PC-3 (cell line): ENCODE measurements at regions of chr1 and their contacts with region 1.

Region 1: GRCh38 chr1:115609021-115609420 is 32.7 kb upstream of the VANGL1 start:
- DNase-seq: peak; percentile 17
- ATAC-seq: peak; percentile 22; the same call in 1 of the 2 replicates
- H3K4me3 ChIP-seq: no peak overlapping the region
- H3K27ac ChIP-seq: no peak overlapping the region
- H3K4me1 ChIP-seq: peaks cover 10% of the 10 kb centered on the region
- H3K27me3 ChIP-seq: no peaks in the 10 kb centered on the region
- CTCF ChIP-seq: no peak

Region 2: GRCh38 chr1:115764541-115764940 is 155.5 kb after region 1 on chr1:
- CTCF ChIA-PET with region 1: interaction called, 22 read pairs
- POLR2A ChIA-PET with region 1: no interaction called
- intact Hi-C with region 1: loop called (anchors 1 kb)
- DNase-seq: peak; percentile 83
- ATAC-seq: peak; percentile 67
- H3K4me3 ChIP-seq: no peak overlapping the region
- H3K27ac ChIP-seq: no peak overlapping the region
- H3K4me1 ChIP-seq: no peaks in the 10 kb centered on the region
- H3K27me3 ChIP-seq: no peaks in the 10 kb centered on the region
- CTCF ChIP-seq: peak; percentile 79

Region 3: DNA sequence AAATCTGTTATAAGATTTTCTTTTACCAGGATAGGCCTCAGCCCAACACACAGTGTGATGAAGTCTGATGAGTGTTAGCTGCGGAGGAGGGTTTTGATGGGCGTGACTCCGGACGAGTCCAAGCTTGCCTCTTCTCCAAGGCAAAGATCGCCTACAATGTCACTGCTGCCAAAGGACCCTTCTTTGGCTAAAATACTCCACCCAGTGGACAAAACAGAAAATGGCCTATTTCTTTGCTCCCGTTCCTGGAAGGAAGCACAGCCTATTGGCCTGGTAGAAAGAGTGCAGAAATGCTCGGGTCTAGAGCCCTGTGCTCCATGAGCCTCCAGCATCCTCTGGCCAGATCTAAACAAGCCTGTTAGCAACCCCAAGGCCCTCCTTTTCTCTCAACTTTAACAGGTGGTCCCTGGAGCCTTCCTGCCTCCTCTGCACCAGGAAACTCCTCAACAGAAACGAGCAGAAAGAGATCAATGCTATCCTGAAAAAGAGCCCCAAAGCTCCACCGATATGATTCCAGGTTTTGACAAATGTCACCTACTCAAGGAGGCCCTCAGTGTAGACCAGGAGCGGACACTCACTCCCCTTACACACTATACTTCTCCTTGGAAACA is 162.9 kb after region 1 on chr1:
- CTCF ChIA-PET with region 1: interaction called, 4 read pairs
- POLR2A ChIA-PET with region 1: no interaction called
- intact Hi-C with region 1: loop called (anchors 1 kb)
- DNase-seq: peak; percentile 97
- ATAC-seq: peak; percentile 97
- H3K4me3 ChIP-seq: 0 out of 2 replicates have a peak overlapping the region, but pooled peaks have one; percentile 19
- H3K27ac ChIP-seq: no peak overlapping the region
- H3K4me1 ChIP-seq: peaks cover 5% of the 10 kb centered on the region; the same call in 1 of the 2 replicates
- H3K27me3 ChIP-seq: peaks cover 4% of the 10 kb centered on the region
- CTCF ChIP-seq: peak; percentile 84

Region 4: GRCh38 chr1:116020668-116021275 is 411.8 kb after region 1 on chr1:
- CTCF ChIA-PET with region 1: no interaction called
- POLR2A ChIA-PET with region 1: no interaction called
- intact Hi-C with region 1: loop called (anchors 10 kb)
- DNase-seq: peak; percentile 77
- ATAC-seq: peak; percentile 85
- H3K4me3 ChIP-seq: no peak overlapping the region
- H3K27ac ChIP-seq: no peak overlapping the region
- H3K4me1 ChIP-seq: no peaks in the 10 kb centered on the region
- H3K27me3 ChIP-seq: no peaks in the 10 kb centered on the region
- CTCF ChIP-seq: peak; percentile 87